Naive thymus-derived CD4-positive, alpha-beta T cell (primary cell): ENCODE measurements at regions of chr16 and their contacts with region 1.

Region 1: GRCh38 chr16:53945996-53946395 is 242.0 kb downstream of the FTO start:
- DNase-seq: peak in 1 of 9 donors; percentile 17
- ATAC-seq: peak; percentile 52
- H3K4me3 ChIP-seq: no peak overlapping the region
- H3K4me3 Mint-ChIP-seq: no peak overlapping the region
- H3K27ac ChIP-seq: no peak overlapping the region
- H3K27ac Mint-ChIP-seq: peak overlapping the region in 1 of 9 donors; percentile 33
- H3K4me1 ChIP-seq: no peaks in the 10 kb centered on the region
- H3K4me1 Mint-ChIP-seq: peaks cover 8 to 33% (median 20%) of the 10 kb centered on the region in 7 donors
- H3K27me3 ChIP-seq: no peaks in the 10 kb centered on the region
- H3K27me3 Mint-ChIP-seq: no peaks in the 10 kb centered on the region

Region 2: GRCh38 chr16:54286090-54286993 is 340.3 kb after region 1 on chr16 and contains the start of gene IRX3:
- CTCF ChIA-PET with region 1: no interaction called
- POLR2A ChIA-PET with region 1: no interaction called
- intact Hi-C with region 1: loop called in 1 of 2 experiments (anchors 5 kb)
- DNase-seq: peak in 1 of 9 donors; percentile 41
- ATAC-seq: no peak
- H3K4me3 ChIP-seq: no peak within 1 kb of the TSS
- H3K4me3 Mint-ChIP-seq: peak within 1 kb of the TSS; percentile 38 to 90 (median 75)
- H3K27ac ChIP-seq: no peak within 1 kb of the TSS
- H3K27ac Mint-ChIP-seq: peak within 1 kb of the TSS in 1 of 9 donors; percentile 71
- H3K4me1 ChIP-seq: no peaks in the 10 kb centered on the region
- H3K4me1 Mint-ChIP-seq: peaks cover 19 to 53% (median 34%) of the 10 kb centered on the region in 7 donors
- H3K27me3 ChIP-seq: no peaks in the 10 kb centered on the region
- H3K27me3 Mint-ChIP-seq: peaks cover 47 to 78% (median 67%) of the 10 kb centered on the region in 5 donors
- total RNA-seq, gene IRX3: 3.2 TPM in 1 of 5 experiments, not detected in the others